ENCODE measurements at regions of chr10 and their contacts with region 1.

Region 1: GRCh38 chr10:118543714-118544400 is 51.6 kb downstream of the PRLHR start:
- DNase-seq: no peak
- H3K4me3 ChIP-seq: no peak overlapping the region
- H3K27me3 ChIP-seq: peaks cover 1% of the 10 kb centered on the region; the same call in 1 of the 2 replicates
- CTCF ChIP-seq: peak; percentile 63

Region 2: GRCh38 chr10:118471863-118472262 is 72.0 kb before region 1 on chr10:
- CTCF ChIA-PET with region 1: no interaction called
- POLR2A ChIA-PET with region 1: no interaction called
- DNase-seq: no peak
- H3K4me3 ChIP-seq: no peak overlapping the region
- H3K27me3 ChIP-seq: no peaks in the 10 kb centered on the region
- CTCF ChIP-seq: no peak

Region 3: DNA sequence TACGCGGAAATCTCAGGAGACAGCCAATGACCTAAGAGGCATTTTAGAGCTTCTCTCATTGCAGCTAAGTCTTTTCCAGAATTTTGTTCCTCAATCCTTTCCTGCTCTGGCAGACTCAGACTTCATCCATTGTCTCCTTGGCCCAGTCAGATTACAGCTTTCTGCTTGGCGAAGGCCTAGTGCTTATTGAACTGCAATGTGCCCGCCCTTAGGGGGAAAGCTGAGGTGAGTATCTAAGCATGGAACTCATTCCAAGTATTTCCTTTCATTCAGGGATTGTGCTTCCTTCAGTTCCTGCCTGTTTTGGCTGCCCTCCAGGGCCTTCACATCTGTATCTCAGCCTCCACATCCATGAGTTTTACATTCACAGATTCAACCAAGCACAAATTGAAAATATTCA is 14.1 kb after region 1 on chr10:
- CTCF ChIA-PET with region 1: interaction called, 10 read pairs
- POLR2A ChIA-PET with region 1: no interaction called
- DNase-seq: no peak
- H3K4me3 ChIP-seq: no peak overlapping the region
- H3K27me3 ChIP-seq: no peaks in the 10 kb centered on the region
- CTCF ChIP-seq: no peak